ENCODE measurements at regions of chr1 and their contacts with region 1.

Region 1: DNA sequence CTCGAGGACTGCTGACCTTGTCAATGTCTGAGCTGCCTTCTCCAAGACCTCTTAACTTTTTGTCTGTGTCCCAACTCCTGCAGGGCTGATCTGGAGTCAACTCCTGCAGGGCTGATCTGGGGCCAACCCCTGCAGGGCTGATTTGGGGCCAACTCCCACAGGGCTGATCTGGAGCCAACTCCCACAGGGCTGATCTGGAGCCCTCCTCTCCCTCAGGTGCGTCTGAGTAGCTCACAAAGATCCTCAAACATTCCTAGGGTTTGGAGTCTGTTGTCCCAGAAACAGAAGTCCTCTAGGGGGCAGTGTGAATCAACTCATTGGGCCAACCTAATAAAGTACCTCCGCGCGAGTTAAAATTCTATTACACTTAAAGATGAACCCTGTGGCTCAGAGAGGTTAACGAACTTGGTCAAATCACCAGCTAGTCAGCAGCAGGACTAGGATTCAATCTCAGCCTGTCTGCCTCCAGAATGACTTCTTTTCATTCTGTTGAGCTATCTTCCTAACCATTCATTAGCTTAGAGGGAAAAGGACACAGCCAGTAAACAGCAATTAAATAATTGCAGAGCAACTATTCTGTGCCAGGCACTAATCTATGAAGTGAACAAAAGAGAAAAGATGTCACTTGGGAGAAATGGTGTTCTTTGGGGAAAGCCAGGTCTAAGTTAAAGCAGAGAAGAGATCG is 17.2 kb upstream of the RLF start:
- DNase-seq: peak; percentile 60
- H3K4me3 ChIP-seq: no peak overlapping the region; a peak in 2 of 4 replicates
- H3K27ac ChIP-seq: no peak overlapping the region
- H3K4me1 ChIP-seq: peaks cover 0 to 8% of the 10 kb centered on the region in 2 experiments; a peak in 1 of 4 replicates
- H3K27me3 ChIP-seq: no peaks in the 10 kb centered on the region; the same call in 1 of the 2 replicates
- CTCF ChIP-seq: peak; percentile 81
- EP300 ChIP-seq: no peak
- RAD21 ChIP-seq: peak; percentile 88

Region 2: GRCh38 chr1:40078512-40079333 is 65.3 kb before region 1 on chr1:
- CTCF ChIA-PET with region 1: interaction called, 11 read pairs
- POLR2A ChIA-PET with region 1: no interaction called
- DNase-seq: peak; percentile 70
- H3K4me3 ChIP-seq: no peak overlapping the region
- H3K27ac ChIP-seq: no peak overlapping the region
- H3K4me1 ChIP-seq: peaks cover 0 to 5% of the 10 kb centered on the region in 2 experiments; a peak in 1 of 4 replicates
- H3K27me3 ChIP-seq: no peaks in the 10 kb centered on the region
- CTCF ChIP-seq: peak; percentile 79
- EP300 ChIP-seq: no peak
- RAD21 ChIP-seq: peak; percentile 58

Region 3: GRCh38 chr1:40132383-40133311 is 11.4 kb before region 1 on chr1:
- CTCF ChIA-PET with region 1: interaction called, 17 read pairs
- POLR2A ChIA-PET with region 1: no interaction called
- DNase-seq: peak; percentile 38
- H3K4me3 ChIP-seq: no peak overlapping the region; a peak in 1 of 4 replicates
- H3K27ac ChIP-seq: no peak overlapping the region
- H3K4me1 ChIP-seq: no peaks in the 10 kb centered on the region
- H3K27me3 ChIP-seq: peaks cover 6% of the 10 kb centered on the region; the same call in 1 of the 2 replicates
- CTCF ChIP-seq: no peak
- EP300 ChIP-seq: no peak
- RAD21 ChIP-seq: no peak

Region 4: GRCh38 chr1:40185951-40186864 is 42.2 kb after region 1 on chr1:
- CTCF ChIA-PET with region 1: interaction called, 10 read pairs
- POLR2A ChIA-PET with region 1: no interaction called
- DNase-seq: no peak
- H3K4me3 ChIP-seq: no peak overlapping the region
- H3K27ac ChIP-seq: peak overlapping the region in 1 of 2 experiments; percentile 11; a peak in 1 of 4 replicates
- H3K4me1 ChIP-seq: peaks cover 0 to 24% of the 10 kb centered on the region in 2 experiments; a peak in 1 of 4 replicates
- H3K27me3 ChIP-seq: no peaks in the 10 kb centered on the region
- CTCF ChIP-seq: no peak
- EP300 ChIP-seq: no peak
- RAD21 ChIP-seq: no peak

Region 5: DNA sequence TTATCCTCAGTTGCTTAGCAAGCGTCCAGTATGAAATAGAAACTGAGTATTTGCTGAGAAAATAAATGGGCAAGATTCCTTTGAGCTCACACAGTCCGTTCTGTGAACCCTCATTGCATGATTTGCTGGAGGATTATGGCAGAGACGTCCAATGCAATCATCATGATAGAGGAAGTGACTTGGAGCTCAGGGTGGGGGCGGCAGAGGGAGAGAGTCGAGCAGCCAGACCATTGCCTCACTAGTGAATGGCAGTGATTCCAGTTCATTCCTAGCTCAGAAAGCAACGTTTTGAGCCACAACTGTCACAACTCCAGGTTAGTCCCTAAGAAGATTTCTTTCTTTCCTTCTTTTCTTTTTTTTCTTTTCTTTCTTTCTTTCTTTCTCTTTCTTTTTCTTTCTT is 200.6 kb after region 1 on chr1:
- CTCF ChIA-PET with region 1: interaction called, 280 read pairs
- POLR2A ChIA-PET with region 1: no interaction called
- DNase-seq: peak; percentile 13
- H3K4me3 ChIP-seq: no peak overlapping the region
- H3K27ac ChIP-seq: no peak overlapping the region
- H3K4me1 ChIP-seq: no peaks in the 10 kb centered on the region; a peak in 1 of 4 replicates
- H3K27me3 ChIP-seq: no peaks in the 10 kb centered on the region; the same call in 1 of the 2 replicates
- CTCF ChIP-seq: no peak
- EP300 ChIP-seq: no peak
- RAD21 ChIP-seq: no peak

Region 6: DNA sequence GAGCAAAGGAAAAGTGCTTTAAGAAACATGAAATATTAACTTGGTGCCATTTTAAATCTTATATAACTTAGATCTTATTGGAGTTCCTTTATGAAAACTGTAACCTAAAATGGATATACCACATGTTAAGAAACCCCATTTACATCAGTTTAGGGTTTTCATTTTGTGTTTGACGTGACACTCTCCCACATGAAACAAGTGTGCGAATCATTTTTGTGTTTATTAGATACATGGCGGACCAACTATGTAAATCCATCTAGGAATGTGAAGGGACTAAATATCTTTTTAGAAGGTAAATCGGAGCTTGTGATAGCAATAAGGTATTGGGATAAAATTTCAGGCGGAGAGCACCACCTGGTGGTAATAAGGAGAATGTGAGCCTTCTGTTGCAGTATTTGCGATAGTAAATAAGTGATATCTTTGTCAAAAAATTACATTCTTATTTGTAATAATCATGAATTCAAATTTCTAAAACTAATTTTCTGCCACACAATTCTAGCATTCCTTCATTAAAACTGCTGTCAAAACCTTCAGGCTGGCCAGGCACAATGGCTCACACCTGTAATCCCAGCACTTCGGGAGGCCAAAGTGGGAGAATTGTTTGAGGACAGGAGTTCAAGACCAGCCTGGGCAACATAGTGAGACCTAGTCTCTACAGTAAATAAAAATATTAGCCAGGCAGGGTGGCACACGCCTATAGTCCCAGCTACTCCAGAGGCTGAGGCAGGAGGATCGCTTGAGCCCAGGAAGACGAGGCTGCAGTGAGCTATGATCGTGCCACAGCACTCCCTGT is 260.8 kb after region 1 on chr1:
- CTCF ChIA-PET with region 1: interaction called, 69 read pairs
- POLR2A ChIA-PET with region 1: no interaction called
- DNase-seq: peak; percentile 49
- H3K4me3 ChIP-seq: no peak overlapping the region; a peak in 1 of 4 replicates
- H3K27ac ChIP-seq: no peak overlapping the region
- H3K4me1 ChIP-seq: no peaks in the 10 kb centered on the region; a peak in 2 of 4 replicates
- H3K27me3 ChIP-seq: no peaks in the 10 kb centered on the region
- CTCF ChIP-seq: peak; percentile 94
- EP300 ChIP-seq: no peak
- RAD21 ChIP-seq: peak; percentile 89

Region 7: GRCh38 chr1:40438391-40439015 is 294.5 kb after region 1 on chr1:
- CTCF ChIA-PET with region 1: interaction called, 30 read pairs
- POLR2A ChIA-PET with region 1: no interaction called
- DNase-seq: peak; percentile 75
- H3K4me3 ChIP-seq: no peak overlapping the region
- H3K27ac ChIP-seq: no peak overlapping the region
- H3K4me1 ChIP-seq: no peaks in the 10 kb centered on the region
- H3K27me3 ChIP-seq: no peaks in the 10 kb centered on the region
- CTCF ChIP-seq: peak; percentile 67
- EP300 ChIP-seq: no peak
- RAD21 ChIP-seq: peak; percentile 52